ENCODE measurements at regions of chr3 and their contacts with region 1.

Region 1: GRCh38 chr3:146326670-146327543 is 76.0 kb upstream of the PLSCR4 start:
- DNase-seq: peak; percentile 26
- H3K4me3 ChIP-seq: no peak overlapping the region
- CTCF ChIP-seq: peak; percentile 40

Region 2: GRCh38 chr3:145900056-145900829 is 426.7 kb before region 1 on chr3:
- CTCF ChIA-PET with region 1: no interaction called
- POLR2A ChIA-PET with region 1: no interaction called
- DNase-seq: no peak
- H3K4me3 ChIP-seq: no peak overlapping the region
- CTCF ChIP-seq: no peak

Region 3: GRCh38 chr3:146065573-146066006 is 261.3 kb before region 1 on chr3:
- CTCF ChIA-PET with region 1: interaction called, 21 read pairs
- POLR2A ChIA-PET with region 1: no interaction called
- DNase-seq: no peak
- H3K4me3 ChIP-seq: no peak overlapping the region
- CTCF ChIP-seq: peak; percentile 36

Region 4: GRCh38 chr3:146195030-146195429 is 131.9 kb before region 1 on chr3:
- CTCF ChIA-PET with region 1: interaction called, 208 read pairs
- POLR2A ChIA-PET with region 1: interaction called, 3 read pairs
- DNase-seq: no peak
- H3K4me3 ChIP-seq: no peak overlapping the region
- CTCF ChIP-seq: no peak

Region 5: DNA sequence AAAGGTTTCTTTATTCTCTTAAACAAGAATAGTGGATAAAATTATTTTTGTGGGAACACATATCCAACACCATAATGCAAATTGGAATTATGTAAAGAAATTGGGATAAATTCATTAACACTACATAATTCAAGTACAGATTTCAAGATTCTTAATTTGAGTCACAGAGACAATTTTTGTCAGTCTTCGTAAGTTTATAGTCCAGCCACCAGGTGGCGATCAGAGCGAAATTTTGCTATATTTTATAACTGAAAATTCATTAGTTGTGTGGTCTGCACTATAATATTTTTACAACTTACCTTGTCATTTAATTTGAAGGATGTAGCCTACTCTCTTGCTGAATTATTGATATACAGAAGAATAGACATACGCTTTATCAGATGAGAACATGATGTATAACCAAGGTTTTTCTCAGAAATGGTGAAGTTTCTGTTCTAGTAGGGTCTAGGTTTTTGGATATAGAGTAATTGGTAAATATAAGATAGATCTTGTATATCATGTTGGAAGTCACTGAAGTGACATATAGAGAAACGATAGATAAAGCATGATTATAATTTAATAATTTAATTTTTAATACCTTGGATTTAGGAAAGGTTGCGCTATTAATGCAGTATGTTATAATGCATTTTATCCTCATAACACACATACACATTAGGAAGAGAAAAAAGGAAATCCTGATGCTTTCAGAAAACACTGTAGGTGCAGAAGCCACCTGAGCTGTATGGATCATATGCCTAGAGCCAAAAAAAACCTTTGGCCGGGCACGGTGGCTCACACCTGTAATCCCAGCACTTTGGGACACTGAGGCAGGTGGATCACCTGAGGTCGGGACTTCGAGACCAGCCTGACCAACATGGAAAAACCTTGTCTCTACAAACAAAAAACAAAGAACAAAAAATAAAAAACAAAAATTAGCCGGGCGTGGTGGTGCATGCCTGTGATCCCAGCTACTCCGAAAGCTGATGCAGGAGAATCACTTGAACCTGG is 107.7 kb before region 1 on chr3:
- CTCF ChIA-PET with region 1: interaction called, 100 read pairs
- POLR2A ChIA-PET with region 1: no interaction called
- DNase-seq: no peak
- H3K4me3 ChIP-seq: no peak overlapping the region
- CTCF ChIP-seq: no peak

Region 6: DNA sequence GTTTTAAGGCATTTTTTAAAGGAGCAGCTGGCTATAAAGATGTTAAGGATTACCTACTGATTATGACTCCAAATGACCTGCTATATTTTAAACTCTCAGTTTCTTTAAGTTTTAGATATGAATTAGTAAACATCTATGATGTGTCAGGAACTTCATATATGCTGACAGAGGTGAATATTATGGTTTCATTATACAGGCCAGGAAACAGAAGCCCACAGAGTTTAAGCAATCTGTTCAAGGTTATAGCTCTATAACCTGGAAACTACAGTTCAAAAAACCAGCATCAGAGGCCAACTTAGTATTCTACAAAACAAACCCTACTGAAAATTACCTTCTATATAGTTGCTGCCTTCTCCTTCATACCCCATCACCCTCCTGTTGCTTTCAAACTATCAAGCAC is 93.4 kb before region 1 on chr3:
- CTCF ChIA-PET with region 1: interaction called, 10 read pairs
- POLR2A ChIA-PET with region 1: no interaction called
- DNase-seq: no peak
- H3K4me3 ChIP-seq: no peak overlapping the region
- CTCF ChIP-seq: no peak

Region 7: DNA sequence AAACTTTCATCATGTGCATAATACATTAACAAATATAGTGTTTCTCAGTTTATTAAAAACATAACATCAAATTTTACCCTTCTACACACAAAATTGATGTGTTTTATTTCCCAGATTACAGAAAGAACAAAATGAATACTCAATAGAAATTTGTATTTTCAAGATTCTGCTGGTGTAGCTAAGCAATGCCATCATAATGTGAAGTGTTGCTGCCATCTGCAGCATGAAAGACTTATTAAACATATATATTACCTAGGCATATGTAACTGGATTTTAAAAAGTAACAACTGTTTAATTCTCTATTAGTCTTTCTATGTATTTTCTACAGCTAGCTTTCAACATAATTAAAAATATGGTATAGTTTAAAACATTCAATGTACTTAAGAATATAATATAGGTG is 250.8 kb after region 1 on chr3:
- CTCF ChIA-PET with region 1: interaction called, 26 read pairs
- POLR2A ChIA-PET with region 1: no interaction called
- DNase-seq: no peak
- H3K4me3 ChIP-seq: no peak overlapping the region
- CTCF ChIP-seq: no peak